Breast epithelium (tissue), 4 donors: ENCODE measurements at regions of chr5 and their contacts with region 1.

Region 1: DNA sequence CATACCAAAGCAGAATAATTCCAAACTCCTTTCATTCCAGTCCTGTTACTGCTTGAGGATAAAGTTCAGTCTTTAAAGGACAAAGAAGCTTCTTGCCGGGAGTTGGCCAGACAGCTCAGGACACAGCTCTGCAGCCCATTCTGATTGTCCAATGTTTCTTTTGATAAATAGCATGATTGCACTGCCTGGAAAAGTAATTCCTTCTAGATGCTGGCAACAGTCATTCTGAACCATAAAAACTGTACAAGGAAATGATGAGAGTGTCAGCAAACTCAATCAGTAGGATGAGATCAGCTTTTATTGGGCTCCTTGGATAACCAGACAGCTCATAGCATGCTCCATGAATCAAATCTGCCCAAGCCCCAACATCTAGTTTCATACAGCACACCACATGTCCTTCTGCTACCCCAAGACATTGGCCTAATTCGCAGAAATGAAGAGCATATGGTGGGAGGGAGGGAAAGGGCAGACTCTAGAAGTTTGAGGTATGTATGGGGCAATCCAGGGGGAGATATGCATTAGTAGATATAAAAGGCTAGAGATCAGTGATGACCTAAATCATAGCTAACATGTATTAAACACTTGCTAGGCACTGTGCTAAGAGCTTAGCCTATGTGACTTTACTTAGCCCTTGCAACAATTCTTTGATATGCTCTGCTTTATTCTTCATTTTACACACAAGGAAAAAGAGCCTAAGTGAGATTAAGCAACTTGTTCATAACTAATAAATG is 219.9 kb upstream of the NREP start:
- DNase-seq: no peak
- H3K4me3 ChIP-seq: no peak overlapping the region
- H3K27ac ChIP-seq: no peak overlapping the region
- H3K4me1 ChIP-seq: no peaks in the 10 kb centered on the region
- H3K27me3 ChIP-seq: no peaks in the 10 kb centered on the region
- CTCF ChIP-seq: no peak
- POLR2A ChIP-seq: no peak

Region 2: DNA sequence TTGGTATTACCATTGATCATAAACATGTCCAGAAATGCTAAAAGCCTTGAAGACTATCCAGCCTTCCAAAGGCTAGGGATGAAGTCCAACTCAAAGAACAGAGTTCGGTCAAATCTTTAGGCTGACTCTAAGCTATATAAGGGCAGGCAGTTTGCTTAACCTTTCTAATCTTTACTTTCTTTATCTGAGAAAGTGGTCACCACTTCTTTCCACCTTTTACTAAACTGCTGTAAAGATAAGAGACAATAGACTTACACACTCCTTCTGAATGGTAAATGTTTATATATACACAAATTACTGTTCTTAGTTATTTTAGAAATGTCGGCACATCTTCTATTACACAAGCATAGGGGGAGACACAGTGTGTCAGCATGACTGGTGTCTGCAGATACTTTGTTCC is 320.3 kb before region 1 on chr5:
- intact Hi-C with region 1: no loop called
- DNase-seq: no peak
- H3K4me3 ChIP-seq: no peak overlapping the region
- H3K27ac ChIP-seq: no peak overlapping the region
- H3K4me1 ChIP-seq: no peaks in the 10 kb centered on the region
- H3K27me3 ChIP-seq: no peaks in the 10 kb centered on the region
- CTCF ChIP-seq: no peak
- POLR2A ChIP-seq: no peak

Region 3: DNA sequence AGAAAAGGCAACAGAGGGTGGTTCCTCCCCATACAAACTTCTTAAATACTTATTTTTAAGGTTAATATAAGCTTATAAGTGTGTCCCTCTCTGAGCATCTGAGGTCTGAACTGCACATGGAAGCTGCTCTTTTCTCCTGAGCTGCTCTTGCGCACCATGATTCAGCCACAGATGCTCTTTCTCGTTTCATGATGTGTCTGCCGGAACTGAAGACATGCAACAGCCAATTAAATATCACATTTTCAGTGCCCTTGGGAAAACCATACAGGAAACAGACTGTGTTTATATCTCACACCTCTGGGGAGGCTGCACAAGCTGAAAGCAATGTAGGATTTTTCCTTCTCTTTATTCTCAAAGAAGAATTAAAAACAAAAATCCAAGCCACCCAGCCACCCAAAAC is 123.1 kb before region 1 on chr5:
- intact Hi-C with region 1: loop called (anchors 10 kb)
- DNase-seq: no peak
- H3K4me3 ChIP-seq: no peak overlapping the region
- H3K27ac ChIP-seq: no peak overlapping the region
- H3K4me1 ChIP-seq: no peaks in the 10 kb centered on the region
- H3K27me3 ChIP-seq: no peaks in the 10 kb centered on the region
- CTCF ChIP-seq: no peak
- POLR2A ChIP-seq: no peak

Region 4: DNA sequence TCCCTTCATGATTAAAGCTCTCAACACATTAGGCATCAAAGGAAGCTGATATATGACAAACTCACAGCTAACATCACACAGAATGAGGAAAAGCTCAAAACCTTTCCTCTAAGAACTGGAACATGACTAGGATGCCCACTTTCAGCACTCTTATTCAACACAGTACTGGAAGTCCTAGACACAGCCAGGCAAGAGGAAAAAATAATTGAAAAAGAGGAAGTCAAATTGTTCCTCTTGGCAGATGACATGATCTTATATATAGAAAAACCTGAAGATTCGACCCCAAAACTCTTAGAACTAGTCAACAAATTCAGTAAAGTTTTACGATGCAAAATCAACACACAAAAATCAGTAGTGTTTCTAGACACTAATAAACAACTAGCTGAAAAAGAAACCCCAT is 75.6 kb before region 1 on chr5:
- intact Hi-C with region 1: no loop called
- DNase-seq: no peak
- H3K4me3 ChIP-seq: no peak overlapping the region
- H3K27ac ChIP-seq: no peak overlapping the region
- H3K4me1 ChIP-seq: no peaks in the 10 kb centered on the region
- H3K27me3 ChIP-seq: no peaks in the 10 kb centered on the region
- CTCF ChIP-seq: no peak
- POLR2A ChIP-seq: no peak